ENCODE measurements at regions of chr11 and their contacts with region 1.

Region 1: GRCh38 chr11:46346886-46347636 is at the start of gene DGKZ:
- DNase-seq: peak; percentile 93
- ATAC-seq: peak; percentile 66
- H3K4me3 Mint-ChIP-seq: peak within 1 kb of the TSS; percentile 90
- H3K27ac Mint-ChIP-seq: peak within 1 kb of the TSS; percentile 96
- H3K4me1 Mint-ChIP-seq: peaks cover 81% of the 10 kb centered on the region
- H3K27me3 Mint-ChIP-seq: no peaks in the 10 kb centered on the region
- total RNA-seq, gene DGKZ: 87.6 to 101 TPM

Region 2: GRCh38 chr11:45846974-45847910 is 499.8 kb before region 1 on chr11 and contains the start of gene CRY2:
- CTCF ChIA-PET with region 1: no interaction called
- POLR2A ChIA-PET with region 1: no interaction called
- intact Hi-C with region 1: loop called in 1 of 2 experiments (anchors 1 kb)
- DNase-seq: peak; percentile 99
- ATAC-seq: peak; percentile 90
- H3K4me3 Mint-ChIP-seq: peak within 1 kb of the TSS; percentile 74
- H3K27ac Mint-ChIP-seq: peak within 1 kb of the TSS; percentile 58
- H3K4me1 Mint-ChIP-seq: peaks cover 53% of the 10 kb centered on the region
- H3K27me3 Mint-ChIP-seq: no peaks in the 10 kb centered on the region
- total RNA-seq, gene CRY2: 13.1 to 14.1 TPM

Region 3: DNA sequence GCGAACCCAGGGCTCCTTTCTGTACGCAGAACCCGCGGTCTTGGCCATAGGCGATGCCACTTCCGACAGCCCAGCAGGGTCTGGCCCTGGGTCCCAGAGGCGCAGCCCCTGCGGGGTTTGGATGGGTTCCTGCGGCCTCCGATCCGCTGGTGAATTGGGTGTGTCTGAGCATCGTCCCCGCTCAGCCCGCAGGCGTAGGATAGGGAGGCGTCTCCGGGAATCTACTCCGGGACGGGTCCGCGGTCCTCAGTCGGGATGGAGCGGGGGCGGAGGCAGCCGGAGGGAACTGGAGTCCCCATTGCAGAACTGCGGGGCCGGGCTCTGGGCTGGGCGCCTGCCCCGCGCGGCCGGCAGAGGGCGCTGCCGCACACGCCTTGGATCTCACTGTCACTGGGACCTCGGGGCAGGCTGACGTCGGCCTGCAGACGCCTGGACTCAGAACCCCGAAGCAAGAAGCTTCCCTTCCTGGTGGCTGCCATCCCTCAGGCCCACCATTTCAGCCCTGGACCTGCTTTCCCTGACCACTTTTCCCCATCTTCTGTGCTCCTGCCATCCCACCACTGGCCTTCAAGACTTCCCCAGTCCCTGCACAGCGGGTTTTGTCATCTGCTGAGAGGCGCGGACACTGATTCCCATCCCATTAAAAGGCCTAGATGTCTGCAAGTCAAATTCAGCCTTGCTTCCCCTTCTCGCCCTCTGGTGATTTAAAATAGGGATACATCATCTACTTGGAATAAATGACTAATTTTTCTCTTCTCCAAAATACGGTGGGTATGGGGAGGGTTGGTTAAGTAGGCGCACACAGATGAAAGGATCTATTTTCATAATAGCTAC is 107.9 kb before region 1 on chr11:
- CTCF ChIA-PET with region 1: interaction called, 7 read pairs
- POLR2A ChIA-PET with region 1: interaction called, 3 read pairs
- intact Hi-C with region 1: loop called in 1 of 2 experiments (anchors 1 kb)
- DNase-seq: peak; percentile 90
- ATAC-seq: peak; percentile 70
- H3K4me3 Mint-ChIP-seq: peak overlapping the region; percentile 70
- H3K27ac Mint-ChIP-seq: peak overlapping the region; percentile 6
- H3K4me1 Mint-ChIP-seq: peaks cover 36% of the 10 kb centered on the region
- H3K27me3 Mint-ChIP-seq: peaks cover 11% of the 10 kb centered on the region

Region 4: GRCh38 chr11:46361283-46362155 is 14.5 kb after region 1 on chr11:
- CTCF ChIA-PET with region 1: interaction called, 141 read pairs
- POLR2A ChIA-PET with region 1: interaction called, 5 read pairs
- intact Hi-C with region 1: loop called in 1 of 2 experiments (anchors 2 kb)
- DNase-seq: peak; percentile 86
- ATAC-seq: peak; percentile 97
- H3K4me3 Mint-ChIP-seq: peak overlapping the region; percentile 72
- H3K27ac Mint-ChIP-seq: peak overlapping the region; percentile 96
- H3K4me1 Mint-ChIP-seq: peaks cover 64% of the 10 kb centered on the region
- H3K27me3 Mint-ChIP-seq: no peaks in the 10 kb centered on the region

Region 5: GRCh38 chr11:46593550-46594373 is 246.7 kb after region 1 on chr11 and contains the start of gene AMBRA1:
- CTCF ChIA-PET with region 1: no interaction called
- POLR2A ChIA-PET with region 1: no interaction called
- intact Hi-C with region 1: loop called in 1 of 2 experiments (anchors 1 kb)
- DNase-seq: peak; percentile 91
- ATAC-seq: peak; percentile 87
- H3K4me3 Mint-ChIP-seq: peak within 1 kb of the TSS; percentile 93
- H3K27ac Mint-ChIP-seq: peak within 1 kb of the TSS; percentile 91
- H3K4me1 Mint-ChIP-seq: peaks cover 40% of the 10 kb centered on the region
- H3K27me3 Mint-ChIP-seq: no peaks in the 10 kb centered on the region
- total RNA-seq, gene AMBRA1: 24.8 to 26.4 TPM

Region 6: GRCh38 chr11:47213985-47214564 is 867.0 kb after region 1 on chr11:
- CTCF ChIA-PET with region 1: no interaction called
- POLR2A ChIA-PET with region 1: no interaction called
- intact Hi-C with region 1: loop called in 1 of 2 experiments (anchors 5 kb)
- DNase-seq: peak; percentile 94
- ATAC-seq: peak; percentile 80
- H3K4me3 Mint-ChIP-seq: peak overlapping the region; percentile 99
- H3K27ac Mint-ChIP-seq: peak overlapping the region; percentile 100
- H3K4me1 Mint-ChIP-seq: peaks cover 31% of the 10 kb centered on the region
- H3K27me3 Mint-ChIP-seq: no peaks in the 10 kb centered on the region

Region 7: GRCh38 chr11:47642099-47642855 is 1295.2 kb after region 1 on chr11 and contains the start of gene MTCH2:
- CTCF ChIA-PET with region 1: no interaction called
- POLR2A ChIA-PET with region 1: no interaction called
- intact Hi-C with region 1: loop called in 1 of 2 experiments (anchors 1 kb)
- DNase-seq: peak; percentile 98
- ATAC-seq: peak; percentile 94
- H3K4me3 Mint-ChIP-seq: peak within 1 kb of the TSS; percentile 99
- H3K27ac Mint-ChIP-seq: peak within 1 kb of the TSS; percentile 96
- H3K4me1 Mint-ChIP-seq: peaks cover 25% of the 10 kb centered on the region
- H3K27me3 Mint-ChIP-seq: no peaks in the 10 kb centered on the region
- total RNA-seq, gene MTCH2: 94.8 to 138 TPM

Measured in activated CD4-positive, alpha-beta T cell treated with anti-CD3 and anti-CD28 coated beads for 36 hours (primary cell).